HCT116 (cell line): ENCODE measurements at regions of chr7 and their contacts with region 1.

Region 1: GRCh38 chr7:2104107-2104710 is 128.5 kb downstream of the MAD1L1 start:
- DNase-seq: peak; percentile 67
- ATAC-seq: peak; percentile 84
- H3K4me3 ChIP-seq: no peak overlapping the region
- H3K27ac ChIP-seq: peak overlapping the region; percentile 59
- H3K4me1 ChIP-seq: peaks cover 28 to 52% of the 10 kb centered on the region in 2 experiments
- H3K27me3 ChIP-seq: no peaks in the 10 kb centered on the region
- CTCF ChIP-seq: peak in 2 of 3 experiments; percentile 68 to 76; a peak in 4 of 6 replicates
- POLR2A ChIP-seq: no peak
- RAD21 ChIP-seq: no peak

Region 2: DNA sequence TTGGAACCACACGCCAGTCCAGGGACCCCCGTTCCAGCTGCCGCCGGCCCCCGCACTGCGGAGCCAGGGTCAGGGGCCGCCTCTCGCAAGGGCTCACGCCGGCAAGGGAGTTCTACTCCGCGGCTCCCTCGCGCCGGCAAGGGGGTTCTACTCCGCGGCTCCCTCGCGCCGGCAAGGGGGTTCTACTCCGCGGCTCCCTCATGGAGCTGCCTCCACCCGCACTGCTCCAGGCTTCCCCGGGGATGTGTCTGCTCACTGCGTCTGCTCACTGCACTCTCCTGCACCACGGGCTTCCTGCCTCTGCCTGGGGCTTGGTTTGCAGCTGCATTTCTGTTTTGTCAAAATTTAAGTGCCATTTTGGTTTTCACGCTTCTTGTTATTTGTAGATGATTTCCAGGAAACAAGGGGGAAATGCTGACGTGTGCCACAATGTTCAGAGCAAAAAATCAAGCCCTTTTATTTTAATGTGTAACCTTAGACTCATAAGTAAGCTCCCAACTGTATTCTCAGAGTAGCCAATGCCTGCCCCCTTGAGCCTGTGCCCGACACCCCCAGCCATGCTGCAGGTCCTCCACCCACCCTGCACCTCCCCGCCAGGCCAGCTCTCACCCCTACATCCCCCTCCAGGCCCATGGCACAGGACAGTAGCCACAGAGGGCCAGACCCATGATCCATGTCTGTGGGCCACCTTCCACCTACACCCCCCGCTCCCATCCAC is 117.7 kb before region 1 on chr7:
- CTCF ChIA-PET with region 1: no interaction called
- POLR2A ChIA-PET with region 1: no interaction called
- RAD21 ChIA-PET with region 1: no interaction called
- intact Hi-C with region 1: no loop called
- DNase-seq: no peak
- ATAC-seq: no peak
- H3K4me3 ChIP-seq: no peak overlapping the region
- H3K27ac ChIP-seq: no peak overlapping the region
- H3K4me1 ChIP-seq: peaks cover 0 to 1% of the 10 kb centered on the region in 2 experiments; a peak in 1 of 4 replicates
- H3K27me3 ChIP-seq: no peaks in the 10 kb centered on the region
- CTCF ChIP-seq: no peak
- POLR2A ChIP-seq: no peak
- RAD21 ChIP-seq: no peak

Region 3: GRCh38 chr7:2120251-2120660 is 16.0 kb after region 1 on chr7:
- CTCF ChIA-PET with region 1: no interaction called
- POLR2A ChIA-PET with region 1: no interaction called
- RAD21 ChIA-PET with region 1: no interaction called
- intact Hi-C with region 1: no loop called
- DNase-seq: no peak
- ATAC-seq: no peak
- H3K4me3 ChIP-seq: no peak overlapping the region
- H3K27ac ChIP-seq: no peak overlapping the region
- H3K4me1 ChIP-seq: peaks cover 28 to 38% of the 10 kb centered on the region in 2 experiments
- H3K27me3 ChIP-seq: no peaks in the 10 kb centered on the region
- CTCF ChIP-seq: no peak
- POLR2A ChIP-seq: no peak
- RAD21 ChIP-seq: no peak

Region 4: DNA sequence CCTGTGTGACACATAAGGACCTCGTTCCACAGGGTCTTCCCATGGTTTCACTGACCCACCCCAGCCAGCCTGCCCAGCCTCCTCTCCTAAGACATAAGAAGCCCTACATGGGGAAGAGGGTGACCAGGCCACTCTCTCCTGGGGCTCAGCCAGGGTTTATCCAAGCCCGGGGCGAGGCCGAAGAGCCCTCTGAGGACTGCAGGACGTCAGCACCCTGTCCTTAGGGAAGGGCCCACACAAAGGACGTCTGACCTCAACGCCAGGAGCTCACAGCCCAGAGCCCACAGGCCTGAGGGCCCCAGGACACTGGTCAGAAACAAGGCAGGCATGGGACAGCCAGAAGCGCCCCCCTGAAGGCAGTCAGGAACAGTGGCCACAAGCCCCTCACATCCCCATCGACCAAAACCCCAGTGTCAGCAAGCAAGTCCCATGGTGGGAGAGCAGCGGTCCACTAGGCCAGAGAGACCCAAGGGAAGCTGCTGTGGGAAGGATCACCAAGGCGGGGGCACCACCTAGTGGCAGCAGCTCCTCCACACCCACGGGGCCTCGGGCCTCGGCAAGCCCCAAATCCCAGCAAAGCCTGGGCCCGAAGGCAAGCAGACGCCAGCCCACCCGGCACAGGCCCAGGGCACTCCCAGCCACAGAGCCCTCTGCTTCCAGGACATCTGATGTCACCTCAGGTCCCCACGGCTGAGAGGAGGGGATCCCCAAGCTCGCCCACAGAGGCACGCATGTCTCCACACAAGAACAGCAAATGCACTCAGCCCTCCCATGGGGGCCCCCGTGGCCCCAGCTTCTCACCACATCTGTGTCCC is 105.1 kb after region 1 on chr7:
- CTCF ChIA-PET with region 1: interaction called, 3 read pairs
- POLR2A ChIA-PET with region 1: no interaction called
- RAD21 ChIA-PET with region 1: no interaction called
- intact Hi-C with region 1: loop called (anchors 10 kb)
- DNase-seq: no peak
- ATAC-seq: peak; percentile 89
- H3K4me3 ChIP-seq: no peak overlapping the region
- H3K27ac ChIP-seq: no peak overlapping the region
- H3K4me1 ChIP-seq: no peaks in the 10 kb centered on the region
- H3K27me3 ChIP-seq: no peaks in the 10 kb centered on the region
- CTCF ChIP-seq: peak; percentile 44 to 64 (median 58); a peak in 5 of 6 replicates
- POLR2A ChIP-seq: no peak
- RAD21 ChIP-seq: peak; percentile 86

Region 5: DNA sequence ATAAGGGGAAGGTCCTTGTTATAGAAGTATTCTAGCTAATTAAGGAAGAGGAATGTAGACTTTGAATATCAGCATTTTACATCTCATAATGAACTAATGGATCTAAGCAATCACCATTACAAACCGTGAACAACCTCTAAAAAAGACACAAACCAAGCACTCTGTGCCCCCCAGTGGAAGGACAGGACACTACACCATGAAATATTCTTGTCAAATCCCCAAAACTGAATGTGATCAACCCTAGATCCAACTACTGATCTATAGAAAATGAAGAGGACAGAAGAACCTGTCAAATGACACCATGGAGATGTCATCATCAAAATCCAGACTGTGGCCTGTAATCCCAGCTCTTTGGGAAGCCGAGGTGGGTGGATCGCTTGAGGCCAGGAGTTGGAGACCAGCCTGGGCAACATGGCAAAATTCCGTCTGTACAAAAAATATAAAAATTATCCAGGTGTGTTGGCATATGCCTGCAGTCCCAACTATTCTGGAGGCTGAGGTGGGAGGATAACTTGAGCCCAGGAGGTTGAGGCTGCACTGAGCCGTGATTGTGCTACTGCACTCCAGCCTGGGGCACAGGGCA is 1050.8 kb after region 1 on chr7:
- CTCF ChIA-PET with region 1: no interaction called
- POLR2A ChIA-PET with region 1: no interaction called
- RAD21 ChIA-PET with region 1: no interaction called
- intact Hi-C with region 1: no loop called
- DNase-seq: peak; percentile 32
- ATAC-seq: peak; percentile 72
- H3K4me3 ChIP-seq: no peak overlapping the region
- H3K27ac ChIP-seq: no peak overlapping the region
- H3K4me1 ChIP-seq: no peaks in the 10 kb centered on the region
- H3K27me3 ChIP-seq: peaks cover 3% of the 10 kb centered on the region; the same call in 1 of the 2 replicates
- CTCF ChIP-seq: peak; percentile 56 to 67 (median 66)
- POLR2A ChIP-seq: no peak
- RAD21 ChIP-seq: peak; percentile 77